RWPE1 (cell line): ENCODE measurements at regions of chr7 and their contacts with region 1.

Region 1: DNA sequence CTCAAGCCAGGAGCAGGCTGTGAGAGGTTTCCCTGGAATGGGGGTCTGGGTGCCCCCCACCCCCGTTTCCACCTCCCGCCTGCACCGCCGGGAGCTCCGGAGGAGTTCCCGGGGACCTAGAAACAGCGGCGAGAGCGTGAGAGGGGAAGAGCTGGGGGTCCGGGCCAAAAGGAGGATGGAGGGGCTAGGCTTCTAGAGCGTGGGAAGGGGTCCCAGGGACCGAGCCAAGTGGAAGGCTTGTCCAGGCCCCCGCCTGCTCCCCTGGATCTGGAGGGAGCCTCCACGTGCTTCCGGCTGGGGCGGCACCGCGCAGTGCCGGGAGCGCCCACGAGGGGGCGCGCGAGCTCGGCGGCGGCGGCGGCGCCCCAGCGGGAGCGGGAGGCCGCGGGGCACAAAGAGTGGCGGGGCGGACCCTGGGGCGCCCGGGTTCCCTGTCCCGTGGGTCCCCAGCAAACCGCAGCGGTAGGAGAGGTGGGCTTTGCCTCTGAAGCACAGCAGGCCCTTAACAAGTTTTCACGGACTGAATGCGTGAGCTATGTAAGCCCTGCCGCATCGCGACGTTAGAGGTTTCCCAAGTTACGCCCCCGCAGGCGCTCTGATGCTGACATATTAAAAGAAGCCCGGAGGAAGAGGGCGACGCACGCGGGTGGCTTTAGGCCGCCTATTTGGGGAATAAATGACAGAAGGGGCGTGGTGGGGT is 104.4 kb upstream of the LRRC4 start:
- DNase-seq: peak; percentile 63
- H3K27ac ChIP-seq: no peak overlapping the region
- CTCF ChIP-seq: peak; percentile 100

Region 2: GRCh38 chr7:128104035-128104742 is 31.5 kb before region 1 on chr7:
- CTCF ChIA-PET with region 1: no interaction called
- POLR2A ChIA-PET with region 1: no interaction called
- DNase-seq: no peak
- H3K27ac ChIP-seq: no peak overlapping the region
- CTCF ChIP-seq: no peak

Region 3: GRCh38 chr7:128209229-128210035 is 73.8 kb after region 1 on chr7:
- CTCF ChIA-PET with region 1: interaction called, 58 read pairs
- POLR2A ChIA-PET with region 1: no interaction called
- DNase-seq: peak; percentile 78
- H3K27ac ChIP-seq: no peak overlapping the region
- CTCF ChIP-seq: peak; percentile 99